ENCODE measurements at regions of chr17 and their contacts with region 1.

Region 1: GRCh38 chr17:7740481-7741001 is 23.0 kb downstream of the DNAH2 start:
- H3K4me3 ChIP-seq: no peak overlapping the region
- H3K27ac ChIP-seq: no peak overlapping the region
- H3K4me1 ChIP-seq: no peaks in the 10 kb centered on the region
- CTCF ChIP-seq: no peak

Region 2: GRCh38 chr17:7798839-7799238 is 58.3 kb after region 1 on chr17:
- CTCF ChIA-PET with region 1: interaction called, 10 read pairs
- POLR2A ChIA-PET with region 1: no interaction called
- H3K4me3 ChIP-seq: no peak overlapping the region
- H3K27ac ChIP-seq: no peak overlapping the region
- H3K4me1 ChIP-seq: no peaks in the 10 kb centered on the region
- CTCF ChIP-seq: no peak

Region 3: DNA sequence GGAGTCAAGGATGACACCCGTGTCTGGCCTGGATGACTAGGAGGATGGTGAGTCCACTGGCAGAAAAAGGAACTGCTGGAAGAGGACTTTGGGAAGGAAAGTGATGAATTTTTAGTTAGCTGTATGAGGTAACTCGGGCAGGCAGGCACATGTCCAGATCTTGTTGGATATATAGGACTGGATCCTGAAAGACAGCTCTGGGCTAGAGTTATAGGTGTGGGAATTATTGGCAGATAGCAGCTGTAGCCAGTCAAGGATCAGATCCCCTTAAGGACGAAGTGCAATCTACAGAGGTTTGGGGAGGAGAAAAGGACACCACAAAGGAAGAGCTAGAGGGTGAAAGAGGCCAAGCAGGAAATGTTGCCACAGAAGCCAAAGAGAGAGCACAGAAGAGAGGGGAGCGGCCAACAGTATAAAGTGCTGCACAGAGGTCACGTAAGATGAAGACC is 127.4 kb after region 1 on chr17:
- CTCF ChIA-PET with region 1: interaction called, 22 read pairs
- POLR2A ChIA-PET with region 1: interaction called, 3 read pairs
- H3K4me3 ChIP-seq: no peak overlapping the region
- H3K27ac ChIP-seq: no peak overlapping the region
- H3K4me1 ChIP-seq: peaks cover under 1% of the 10 kb centered on the region
- CTCF ChIP-seq: no peak

Measured in HEK293 (cell line).